Ascending aorta (tissue), 2 donors: ENCODE measurements at regions of chr1 and their contacts with region 1.

Region 1: DNA sequence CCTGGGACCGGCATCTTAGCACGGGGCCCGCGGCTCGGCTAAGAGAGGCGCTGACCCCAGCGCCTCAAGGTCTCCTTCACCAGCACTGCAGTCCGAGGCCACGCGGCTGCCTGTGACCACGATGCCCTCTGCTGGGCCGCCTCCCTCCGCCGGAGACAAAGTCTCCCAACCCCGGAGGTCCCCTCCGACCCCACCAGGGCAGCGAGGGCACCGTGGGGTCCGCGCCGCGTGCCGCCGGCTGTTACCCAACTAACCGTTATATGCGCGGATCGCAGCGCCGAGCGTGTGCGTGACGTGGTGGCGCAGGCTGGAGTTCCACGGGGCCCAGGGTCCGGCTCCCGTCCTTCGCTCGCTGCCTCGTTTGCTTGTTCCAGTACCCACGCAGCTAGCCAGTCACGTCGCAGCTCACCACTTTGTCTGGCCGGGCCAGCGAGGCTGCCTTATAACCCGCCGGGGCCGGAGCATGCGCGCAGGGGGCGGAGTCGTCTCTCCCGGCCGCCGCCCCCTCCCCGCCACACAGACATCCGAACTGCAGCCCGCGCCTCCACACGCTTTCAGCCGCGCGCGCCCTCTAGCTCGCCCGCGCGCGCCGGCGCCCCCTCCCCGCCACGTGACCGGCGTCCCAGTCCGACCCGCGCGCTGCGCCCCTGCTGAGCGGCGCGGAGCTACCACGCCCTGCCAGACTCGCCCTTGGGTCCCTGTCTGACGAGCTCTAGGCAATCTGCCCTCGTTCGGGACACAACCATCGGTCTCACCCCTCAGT is at the start of gene SLC16A1:
- DNase-seq: peak; percentile 80 to 95
- H3K4me3 ChIP-seq: peak within 1 kb of the TSS; percentile 71 to 88
- H3K27ac ChIP-seq: peak within 1 kb of the TSS; percentile 88 to 94
- H3K4me1 ChIP-seq: peaks cover 0 to 23% of the 10 kb centered on the region in 2 donors
- H3K27me3 ChIP-seq: no peaks in the 10 kb centered on the region
- CTCF ChIP-seq: peak in 2 of 3 experiments; percentile 33 to 42
- total RNA-seq, gene SLC16A1: 31.8 TPM

Region 2: GRCh38 chr1:112619520-112620376 is 336.2 kb before region 1 on chr1 and contains the start of gene CAPZA1:
- intact Hi-C with region 1: loop called (anchors 2 kb)
- DNase-seq: peak; percentile 72 to 95
- H3K4me3 ChIP-seq: peak within 1 kb of the TSS; percentile 83 to 84
- H3K27ac ChIP-seq: peak within 1 kb of the TSS; percentile 96 to 100
- H3K4me1 ChIP-seq: peaks cover 5 to 22% of the 10 kb centered on the region in 2 donors
- H3K27me3 ChIP-seq: no peaks in the 10 kb centered on the region
- CTCF ChIP-seq: no peak
- total RNA-seq, gene CAPZA1: 53.5 TPM

Region 3: DNA sequence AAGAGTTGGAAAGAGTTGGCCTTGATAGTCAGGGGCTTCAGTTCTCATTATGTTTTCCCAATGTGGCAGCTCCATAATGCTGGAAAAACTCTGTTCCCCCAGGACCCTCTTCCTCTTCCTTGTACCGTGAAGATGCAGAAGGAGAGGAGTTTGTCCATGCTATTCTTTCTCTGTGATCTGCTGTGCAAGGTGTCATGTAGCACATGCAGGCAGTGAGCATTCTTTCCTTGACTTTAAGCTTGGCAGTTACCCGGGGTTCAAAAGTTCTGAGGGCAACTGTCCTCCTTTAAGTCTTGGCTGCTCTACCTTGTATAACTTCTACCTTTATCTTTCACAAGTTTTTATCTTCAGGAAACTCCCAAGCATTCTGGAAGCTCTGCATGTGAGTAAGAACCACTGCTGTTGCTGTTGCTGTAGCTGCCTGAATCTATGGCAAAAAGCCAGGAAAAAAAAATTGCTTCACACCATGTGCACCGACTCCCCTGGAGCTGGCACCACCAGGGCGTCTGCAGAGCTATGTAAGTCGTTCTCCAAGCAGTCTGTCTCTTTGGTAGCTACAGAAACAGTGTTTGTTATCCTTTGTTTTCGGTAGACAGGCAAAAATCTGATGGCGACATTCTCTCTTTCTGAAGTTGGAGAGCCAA is 42.8 kb after region 1 on chr1:
- intact Hi-C with region 1: loop called (anchors 1 kb)
- DNase-seq: peak; percentile 31 to 90
- H3K4me3 ChIP-seq: no peak overlapping the region
- H3K27ac ChIP-seq: peak overlapping the region; percentile 79 to 87
- H3K4me1 ChIP-seq: peaks cover 7 to 41% of the 10 kb centered on the region in 2 donors
- H3K27me3 ChIP-seq: no peaks in the 10 kb centered on the region
- CTCF ChIP-seq: no peak

Region 4: DNA sequence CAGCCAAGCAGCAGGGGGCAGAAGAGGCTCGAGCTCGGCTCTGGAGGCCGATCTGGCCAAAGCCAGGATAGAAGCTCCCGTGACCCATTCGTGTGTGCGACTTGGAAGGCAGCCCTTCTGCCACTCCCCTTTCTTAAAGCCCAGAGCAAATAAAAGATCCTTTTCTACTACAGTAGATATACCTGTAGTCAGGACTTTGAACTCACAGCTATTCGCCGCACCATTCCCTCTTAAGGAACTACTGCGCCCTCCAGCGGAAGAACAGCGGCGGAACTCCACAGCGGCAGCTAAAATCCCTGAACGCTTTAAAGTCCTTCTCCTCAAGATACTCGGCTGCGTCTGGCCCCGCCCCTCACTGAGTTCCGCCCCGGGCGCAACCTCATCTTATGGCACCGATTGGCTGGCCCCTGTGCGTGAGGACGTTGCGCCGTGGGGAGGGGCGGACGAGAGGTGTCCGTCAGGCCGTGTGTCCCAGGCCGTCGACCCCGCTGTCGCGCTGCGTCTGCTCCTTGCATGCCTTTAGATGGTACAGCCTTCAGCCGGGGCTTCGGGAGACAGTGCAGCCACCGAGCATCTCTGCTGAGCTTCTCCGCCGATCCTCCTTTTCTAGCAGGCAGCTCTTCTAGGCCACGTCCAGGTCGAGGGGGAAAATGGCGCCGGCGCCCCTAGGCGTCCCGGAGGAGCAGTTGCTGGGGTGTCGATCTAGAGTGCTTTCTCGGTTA is 117.0 kb after region 1 on chr1 and contains the start of gene LRIG2:
- intact Hi-C with region 1: loop called (anchors 10 kb)
- DNase-seq: peak; percentile 97 to 99
- H3K4me3 ChIP-seq: peak within 1 kb of the TSS; percentile 63 to 79
- H3K27ac ChIP-seq: peak within 1 kb of the TSS; percentile 84
- H3K4me1 ChIP-seq: peaks cover 3 to 8% of the 10 kb centered on the region in 2 donors
- H3K27me3 ChIP-seq: no peaks in the 10 kb centered on the region
- CTCF ChIP-seq: peak; percentile 77 to 87 (median 83)
- total RNA-seq, gene LRIG2: 16.1 TPM

Region 5: DNA sequence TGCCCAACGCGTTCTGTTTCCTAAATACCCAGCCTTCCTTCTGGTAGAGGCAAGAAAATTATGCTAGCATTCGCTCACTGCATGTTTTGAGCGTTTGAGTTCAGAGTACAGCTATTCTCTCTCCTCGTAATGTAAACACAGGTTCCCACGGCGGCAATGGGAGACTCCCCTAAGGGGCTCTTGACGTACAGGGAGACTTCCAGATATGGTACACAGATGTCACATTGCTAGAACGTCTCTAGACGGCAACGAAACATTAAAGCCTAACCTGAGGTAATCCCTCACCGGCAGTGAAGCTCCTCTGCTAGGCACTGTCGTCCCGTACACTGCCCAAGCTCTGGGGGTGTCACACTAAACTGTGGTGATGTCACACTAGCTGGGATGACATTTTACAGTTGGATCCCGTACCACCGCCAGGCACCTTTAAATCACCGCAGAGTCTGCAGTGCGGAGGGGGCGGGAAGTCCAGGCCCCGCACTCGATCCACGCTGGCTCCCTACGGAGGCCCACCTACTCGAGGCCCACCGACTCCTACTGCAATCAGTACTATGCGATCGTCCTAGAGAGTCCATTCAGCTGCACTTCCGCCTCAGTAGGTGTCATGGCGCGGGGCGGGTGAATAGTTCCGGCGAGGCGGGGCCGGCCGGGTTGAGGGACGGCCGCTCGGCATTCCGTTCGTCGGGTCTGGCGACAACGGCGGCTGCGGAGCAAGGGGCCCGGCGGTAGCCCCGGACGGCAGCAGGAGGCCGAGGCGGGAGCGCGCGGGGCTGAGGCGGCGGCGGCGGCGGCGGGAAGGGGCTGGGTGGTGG is 973.2 kb after region 1 on chr1 and contains the start of gene HIPK1:
- intact Hi-C with region 1: loop called (anchors 5 kb)
- DNase-seq: peak; percentile 67 to 96
- H3K4me3 ChIP-seq: peak within 1 kb of the TSS; percentile 83 to 90
- H3K27ac ChIP-seq: peak within 1 kb of the TSS; percentile 92 to 94
- H3K4me1 ChIP-seq: peaks cover 4 to 33% of the 10 kb centered on the region in 2 donors
- H3K27me3 ChIP-seq: no peaks in the 10 kb centered on the region
- CTCF ChIP-seq: peak in 1 of 3 experiments; percentile 35
- total RNA-seq, gene HIPK1: 41.7 TPM